ENCODE measurements at regions of chr1 and their contacts with region 1.

Region 1: DNA sequence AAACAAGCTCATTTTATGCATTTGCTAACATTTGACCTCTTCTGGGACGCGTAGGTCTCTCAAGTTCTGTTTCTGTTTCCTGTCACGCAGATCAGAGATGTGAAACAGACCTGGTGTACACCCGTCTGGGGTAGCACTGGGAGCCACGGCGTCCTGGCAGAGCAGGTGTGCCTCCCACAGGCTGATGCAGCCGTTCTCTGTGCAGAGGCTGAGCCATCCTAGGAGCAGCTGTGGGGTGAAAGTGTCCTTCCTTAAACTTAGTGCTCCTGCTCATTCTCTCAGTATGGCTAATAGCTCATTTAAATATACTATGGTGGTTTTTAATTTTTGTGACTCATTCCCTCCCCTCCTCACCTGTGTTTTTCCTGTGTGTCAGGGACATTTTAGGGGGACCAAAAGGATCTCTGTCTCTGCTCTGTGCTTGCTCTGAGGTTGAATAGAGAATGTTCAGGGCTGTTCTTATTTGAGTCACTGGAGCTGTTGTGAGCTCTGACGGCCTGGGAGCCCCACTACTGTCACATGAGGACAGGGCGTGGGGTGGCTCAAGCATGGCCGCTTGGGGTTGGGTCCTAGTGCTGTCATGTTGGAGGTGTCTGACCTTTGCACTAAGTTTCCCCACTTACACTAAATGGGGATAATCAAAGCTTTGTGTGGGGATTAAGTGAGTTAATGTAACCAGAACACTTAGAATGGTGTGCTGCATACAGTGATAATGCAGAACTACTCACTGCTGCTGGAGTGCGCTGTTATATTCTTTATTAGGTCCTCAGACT is 43.0 kb downstream of the GALNT2 start:
- DNase-seq: peak; percentile 95
- H3K4me3 Mint-ChIP-seq: peak overlapping the region; percentile 27
- H3K27ac Mint-ChIP-seq: peak overlapping the region; percentile 95
- H3K4me1 Mint-ChIP-seq: peaks cover 90% of the 10 kb centered on the region
- H3K27me3 Mint-ChIP-seq: no peaks in the 10 kb centered on the region

Region 2: DNA sequence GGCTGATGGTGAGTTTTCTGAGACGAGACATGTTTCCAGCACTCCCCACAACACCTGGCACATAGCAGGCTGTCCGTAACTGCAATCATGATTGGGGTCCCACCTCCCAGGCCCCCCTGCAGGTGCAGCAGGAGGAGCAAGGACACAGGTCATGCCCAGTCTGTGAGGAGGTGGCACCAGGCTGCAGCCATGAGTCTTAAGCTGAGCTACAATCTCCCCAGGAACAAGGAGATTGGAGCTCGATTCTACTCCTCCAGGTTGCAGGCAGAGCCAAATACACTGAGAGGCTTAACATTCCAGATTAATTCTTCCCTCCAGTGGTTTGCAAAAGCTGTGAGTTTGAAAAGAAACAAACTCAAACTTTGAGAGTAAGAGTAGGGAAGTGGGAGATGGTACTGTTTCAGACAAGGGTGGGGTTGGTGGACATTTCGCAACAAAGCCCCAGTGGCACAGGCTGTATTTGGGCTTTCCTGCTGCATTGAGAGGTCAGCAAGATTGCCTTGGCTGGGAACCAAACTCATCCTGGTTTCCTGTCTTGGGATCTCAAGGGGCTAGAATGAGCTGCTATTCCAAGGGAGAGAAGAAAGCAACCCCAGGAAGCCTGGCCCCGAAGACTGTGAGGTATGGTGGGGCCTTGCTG is 107.8 kb before region 1 on chr1:
- CTCF ChIA-PET with region 1: no interaction called
- intact Hi-C with region 1: no loop called
- DNase-seq: no peak
- H3K4me3 Mint-ChIP-seq: no peak overlapping the region
- H3K27ac Mint-ChIP-seq: no peak overlapping the region
- H3K4me1 Mint-ChIP-seq: no peaks in the 10 kb centered on the region
- H3K27me3 Mint-ChIP-seq: no peaks in the 10 kb centered on the region

Region 3: GRCh38 chr1:230031131-230031530 is 79.0 kb before region 1 on chr1:
- CTCF ChIA-PET with region 1: interaction called, 6 read pairs
- intact Hi-C with region 1: loop called (anchors 1 kb)
- DNase-seq: peak; percentile 48
- H3K4me3 Mint-ChIP-seq: no peak overlapping the region
- H3K27ac Mint-ChIP-seq: peak overlapping the region; percentile 85
- H3K4me1 Mint-ChIP-seq: peaks cover 29% of the 10 kb centered on the region
- H3K27me3 Mint-ChIP-seq: no peaks in the 10 kb centered on the region

Region 4: DNA sequence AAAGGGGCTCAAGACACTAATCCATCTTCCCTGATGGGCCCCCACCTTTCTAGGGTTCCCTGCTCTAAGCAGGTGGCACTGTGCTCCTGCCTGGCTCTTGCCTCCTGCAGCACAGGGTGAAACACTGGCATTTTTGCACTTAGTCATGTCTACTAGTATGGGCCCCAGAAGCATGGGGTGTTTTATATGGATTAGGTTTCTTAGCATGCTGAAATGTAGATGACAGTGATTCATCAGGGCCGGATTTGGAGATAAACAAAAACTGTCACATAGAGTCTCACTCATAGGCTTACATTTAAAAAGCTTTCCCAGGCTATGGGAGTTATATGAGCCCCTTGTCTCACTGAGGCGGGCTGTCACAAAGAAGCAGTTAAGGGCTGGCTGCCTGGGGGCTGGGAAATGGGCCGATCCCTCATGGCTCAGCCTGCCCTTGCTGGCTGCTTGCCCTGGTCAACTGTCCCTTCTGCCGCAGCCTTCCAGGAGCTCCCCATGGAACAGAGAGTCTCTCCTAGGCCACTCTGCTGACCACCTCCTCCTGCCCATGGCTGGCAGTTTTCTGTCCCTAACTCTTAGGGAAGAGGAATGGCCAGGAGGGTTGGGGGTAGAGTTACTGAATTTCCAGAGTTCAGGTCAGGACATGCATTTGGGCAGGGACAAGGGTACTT is 36.6 kb before region 1 on chr1:
- CTCF ChIA-PET with region 1: interaction called, 10 read pairs
- intact Hi-C with region 1: no loop called
- DNase-seq: peak; percentile 33
- H3K4me3 Mint-ChIP-seq: no peak overlapping the region
- H3K27ac Mint-ChIP-seq: no peak overlapping the region
- H3K4me1 Mint-ChIP-seq: peaks cover 81% of the 10 kb centered on the region
- H3K27me3 Mint-ChIP-seq: no peaks in the 10 kb centered on the region

Region 5: DNA sequence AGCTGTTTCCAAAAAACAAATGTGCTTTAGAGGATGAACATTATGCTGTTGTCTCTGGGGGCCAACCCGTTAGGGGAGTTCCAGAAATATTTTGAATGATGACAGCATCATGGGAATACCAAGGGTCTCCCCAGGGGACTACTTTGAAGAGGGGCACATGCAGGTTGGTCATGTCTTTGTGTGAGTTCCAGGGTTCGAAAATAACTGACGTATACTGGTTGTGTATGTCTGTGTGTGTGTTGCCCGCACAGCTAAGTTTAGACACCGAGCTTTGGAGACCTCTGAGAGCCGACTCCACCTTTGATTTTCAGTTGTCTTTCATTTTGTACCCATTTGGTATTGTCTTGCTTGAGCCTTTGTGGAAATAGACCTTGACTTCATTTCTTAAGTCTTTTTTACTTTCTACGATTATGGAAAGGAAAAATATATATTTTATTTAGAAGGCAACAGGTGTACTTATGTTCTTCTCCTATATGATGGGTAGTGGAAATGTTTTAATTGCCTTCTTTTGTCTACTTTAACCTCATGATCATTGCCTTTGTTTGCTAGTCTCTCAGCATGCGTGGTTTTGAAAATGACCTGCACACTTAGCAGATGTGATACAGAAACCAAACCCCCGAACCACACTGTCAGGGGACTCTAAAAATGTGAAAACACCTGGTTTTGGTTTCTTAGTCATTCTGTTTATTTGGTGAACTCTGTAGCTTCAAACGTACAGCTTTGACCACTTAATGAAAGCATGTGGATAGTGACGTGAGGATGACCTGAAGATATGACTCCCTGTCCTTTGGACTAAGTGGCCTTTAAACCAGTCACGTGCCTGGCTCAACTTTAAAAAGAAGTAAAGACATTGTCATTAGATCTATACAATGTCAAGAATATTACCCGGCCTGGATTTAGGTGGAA is 13.5 kb after region 1 on chr1:
- CTCF ChIA-PET with region 1: interaction called, 7 read pairs
- intact Hi-C with region 1: loop called (anchors 1 kb)
- DNase-seq: peak; percentile 63
- H3K4me3 Mint-ChIP-seq: no peak overlapping the region
- H3K27ac Mint-ChIP-seq: no peak overlapping the region
- H3K4me1 Mint-ChIP-seq: peaks cover 73% of the 10 kb centered on the region
- H3K27me3 Mint-ChIP-seq: no peaks in the 10 kb centered on the region

Region 6: GRCh38 chr1:230270559-230271281 is 160.6 kb after region 1 on chr1:
- CTCF ChIA-PET with region 1: interaction called, 4 read pairs
- intact Hi-C with region 1: loop called (anchors 5 kb)
- DNase-seq: peak; percentile 59
- H3K4me3 Mint-ChIP-seq: no peak overlapping the region
- H3K27ac Mint-ChIP-seq: peak overlapping the region; percentile 75
- H3K4me1 Mint-ChIP-seq: peaks cover 57% of the 10 kb centered on the region
- H3K27me3 Mint-ChIP-seq: no peaks in the 10 kb centered on the region